Caco-2 (cell line): ENCODE measurements at regions of chr7 and their contacts with region 1.

Region 1: DNA sequence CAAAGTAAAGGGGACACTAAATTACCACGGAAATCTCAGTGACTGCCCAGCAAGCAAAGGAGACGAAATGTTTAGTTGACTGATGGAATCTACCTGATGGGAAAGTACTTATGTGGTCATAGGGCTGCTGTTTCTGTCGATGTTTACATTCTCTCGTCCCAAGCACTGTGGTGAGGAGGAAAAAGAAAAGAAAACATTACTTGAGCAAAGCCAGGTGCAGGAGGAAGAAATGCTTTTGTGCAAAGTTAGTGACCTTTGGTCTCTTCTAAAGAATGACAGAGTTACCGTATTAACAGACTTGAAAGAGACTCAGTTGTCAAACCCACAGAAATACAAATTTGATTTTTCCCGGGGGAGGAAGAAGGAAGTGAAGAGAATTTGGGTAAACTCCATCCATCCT is 43.3 kb upstream of the FMC1 start:
- DNase-seq: peak; percentile 62 to 74
- H3K4me3 ChIP-seq: no peak overlapping the region
- H3K4me3 Mint-ChIP-seq: peak overlapping the region; percentile 58
- H3K27ac Mint-ChIP-seq: peak overlapping the region; percentile 56
- H3K4me1 ChIP-seq: peaks cover 60% of the 10 kb centered on the region
- H3K4me1 Mint-ChIP-seq: peaks cover 22% of the 10 kb centered on the region
- H3K27me3 ChIP-seq: no peaks in the 10 kb centered on the region
- H3K27me3 Mint-ChIP-seq: no peaks in the 10 kb centered on the region
- CTCF ChIP-seq: no peak

Region 2: DNA sequence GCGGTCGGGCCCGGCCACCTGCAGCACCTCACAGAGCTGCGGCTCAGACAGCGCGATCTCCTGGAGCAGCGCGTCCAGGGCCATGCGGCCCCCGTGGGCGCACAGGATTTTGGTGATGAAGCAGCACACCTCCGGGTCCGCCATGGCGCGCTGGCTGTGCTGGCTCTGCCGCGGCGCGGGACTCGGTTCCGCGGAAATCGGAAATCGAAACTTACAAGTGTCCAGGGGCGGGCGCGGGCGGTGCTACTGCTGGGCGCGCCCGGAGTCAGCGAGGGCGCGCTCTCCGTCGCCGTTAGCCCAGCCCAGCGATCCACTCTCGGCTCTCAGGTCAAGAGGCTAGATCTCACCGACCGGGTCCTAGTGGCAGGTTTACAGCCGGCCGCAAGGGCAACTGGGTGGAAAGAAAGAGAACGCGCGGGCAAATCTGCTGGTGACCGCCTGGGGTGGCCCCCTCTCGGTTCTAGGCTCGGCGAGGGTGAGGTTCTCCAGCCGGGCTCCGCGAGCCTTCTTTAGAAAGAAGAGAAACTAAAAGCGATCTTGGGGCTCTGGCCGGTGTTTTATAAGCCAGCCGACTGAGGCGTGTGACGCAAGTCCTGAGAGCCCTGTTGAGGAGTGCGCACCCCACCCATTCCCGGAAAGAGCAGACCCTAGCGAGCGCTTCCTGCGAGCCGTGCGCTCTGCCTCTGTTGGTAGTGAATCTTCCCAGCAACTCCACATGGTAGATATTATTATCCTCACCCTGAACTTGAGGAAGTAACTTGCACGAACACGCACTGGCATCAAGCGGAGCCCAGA is 188.4 kb before region 1 on chr7 and contains the start of gene ZC3HAV1:
- CTCF ChIA-PET with region 1: no interaction called
- POLR2A ChIA-PET with region 1: no interaction called
- intact Hi-C with region 1: no loop called
- DNase-seq: peak; percentile 88 to 90
- H3K4me3 ChIP-seq: peak within 1 kb of the TSS; percentile 57
- H3K4me3 Mint-ChIP-seq: peak within 1 kb of the TSS; percentile 85
- H3K27ac Mint-ChIP-seq: peak within 1 kb of the TSS; percentile 55
- H3K4me1 ChIP-seq: peaks cover 8% of the 10 kb centered on the region
- H3K4me1 Mint-ChIP-seq: peaks cover 6% of the 10 kb centered on the region
- H3K27me3 ChIP-seq: no peaks in the 10 kb centered on the region
- H3K27me3 Mint-ChIP-seq: no peaks in the 10 kb centered on the region
- CTCF ChIP-seq: peak; percentile 21 to 42
- total RNA-seq, gene ZC3HAV1: 30.8 and 30.9 TPM in 2 replicates

Region 3: DNA sequence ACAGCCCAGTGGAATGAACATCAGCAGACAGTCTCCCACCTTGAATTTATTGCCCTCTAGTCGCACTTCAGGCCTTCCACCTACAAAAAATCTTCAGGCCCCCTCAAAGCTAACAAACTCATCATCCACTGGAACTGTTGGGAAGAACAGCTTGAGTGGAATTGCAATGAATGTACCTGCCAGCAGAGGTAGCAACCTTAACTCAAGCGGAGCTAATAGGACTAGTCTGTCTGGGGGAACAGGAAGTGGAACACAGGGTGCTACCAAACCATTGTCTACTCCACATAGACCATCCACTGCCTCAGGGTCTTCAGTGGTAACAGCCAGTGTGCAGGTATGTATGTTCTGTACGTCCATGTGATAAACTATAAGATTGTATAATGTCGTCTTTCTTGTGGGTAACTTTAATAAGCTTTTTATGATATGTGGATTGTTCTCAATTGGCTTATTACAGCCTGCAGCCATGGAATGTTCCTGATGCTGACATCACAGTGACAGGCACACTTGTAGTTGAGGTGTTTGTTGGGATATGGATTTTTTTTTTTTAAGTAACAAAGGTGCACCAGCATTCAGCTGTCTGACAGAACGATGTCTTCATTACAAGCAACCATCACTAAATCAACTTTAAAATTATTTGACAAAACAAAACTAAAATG is 13.4 kb before region 1 on chr7:
- CTCF ChIA-PET with region 1: no interaction called
- POLR2A ChIA-PET with region 1: interaction called, 3 read pairs
- intact Hi-C with region 1: loop called (anchors 1 kb)
- DNase-seq: peak in 1 of 2 experiments; percentile 28
- H3K4me3 ChIP-seq: no peak overlapping the region
- H3K4me3 Mint-ChIP-seq: no peak overlapping the region
- H3K27ac Mint-ChIP-seq: no peak overlapping the region
- H3K4me1 ChIP-seq: no peaks in the 10 kb centered on the region
- H3K4me1 Mint-ChIP-seq: no peaks in the 10 kb centered on the region
- H3K27me3 ChIP-seq: no peaks in the 10 kb centered on the region
- H3K27me3 Mint-ChIP-seq: no peaks in the 10 kb centered on the region
- CTCF ChIP-seq: peak; percentile 23 to 26

Region 4: GRCh38 chr7:139737221-139738100 is 439.7 kb after region 1 on chr7:
- CTCF ChIA-PET with region 1: no interaction called
- POLR2A ChIA-PET with region 1: no interaction called
- intact Hi-C with region 1: no loop called
- DNase-seq: no peak
- H3K4me3 ChIP-seq: no peak overlapping the region
- H3K4me3 Mint-ChIP-seq: no peak overlapping the region
- H3K27ac Mint-ChIP-seq: no peak overlapping the region
- H3K4me1 ChIP-seq: peaks cover 20% of the 10 kb centered on the region
- H3K4me1 Mint-ChIP-seq: peaks cover 13% of the 10 kb centered on the region
- H3K27me3 ChIP-seq: no peaks in the 10 kb centered on the region
- H3K27me3 Mint-ChIP-seq: no peaks in the 10 kb centered on the region
- CTCF ChIP-seq: no peak